Dorsolateral prefrontal cortex (tissue), 120 donors: ENCODE measurements at regions of chr6 and their contacts with region 1.

Region 1: DNA sequence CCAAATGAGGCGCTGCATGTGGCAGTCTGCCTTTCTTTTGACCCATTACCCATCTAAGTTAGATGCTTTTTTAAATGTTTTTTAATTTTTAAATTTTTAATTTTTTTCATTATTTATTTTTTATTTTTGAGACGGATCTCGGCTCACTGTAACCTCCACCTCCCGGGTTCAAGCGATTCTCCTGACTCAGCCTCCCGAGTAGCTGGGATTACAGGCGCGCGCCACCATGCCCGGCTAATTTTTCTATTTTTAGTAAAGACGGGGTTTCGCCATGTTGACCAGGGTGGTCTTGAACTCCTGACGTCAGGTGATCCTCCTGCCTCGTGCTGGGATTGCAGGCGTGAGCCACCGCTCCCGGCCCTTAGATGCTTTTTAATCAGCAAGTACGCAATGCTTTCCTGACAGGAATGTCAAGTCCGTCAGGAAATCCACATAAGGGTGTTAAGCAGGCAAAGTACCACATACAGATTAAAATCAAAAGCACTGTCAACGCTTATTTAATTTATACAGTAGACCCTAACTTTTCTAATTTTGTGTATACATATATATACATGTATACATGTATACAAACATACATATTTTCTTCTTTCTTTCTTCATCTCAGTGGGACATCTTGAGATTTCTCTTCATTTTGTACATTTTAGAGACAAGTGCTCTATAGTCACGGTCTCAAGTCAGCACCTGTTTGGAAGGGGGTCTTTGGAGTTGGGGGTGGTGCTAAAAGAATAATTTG is 995 bp upstream of the GSTA4 start:
- DNase-seq: peak in 7 of 10 donors; percentile 28 to 65 (median 45)
- H3K4me3 ChIP-seq: peak overlapping the region; percentile 2 to 98 (median 81)
- H3K27ac ChIP-seq: peak overlapping the region; percentile 10 to 99 (median 97)
- H3K27me3 ChIP-seq: no peaks in the 10 kb centered on the region
- CTCF ChIP-seq: peak in 1 of 56 donors; percentile 16

Region 2: GRCh38 chr6:52712136-52712535 is 283.9 kb before region 1 on chr6:
- intact Hi-C with region 1: no loop called
- DNase-seq: no peak
- H3K4me3 ChIP-seq: no peak overlapping the region
- H3K27ac ChIP-seq: no peak overlapping the region
- H3K27me3 ChIP-seq: no peaks in the 10 kb centered on the region
- CTCF ChIP-seq: no peak

Region 3: DNA sequence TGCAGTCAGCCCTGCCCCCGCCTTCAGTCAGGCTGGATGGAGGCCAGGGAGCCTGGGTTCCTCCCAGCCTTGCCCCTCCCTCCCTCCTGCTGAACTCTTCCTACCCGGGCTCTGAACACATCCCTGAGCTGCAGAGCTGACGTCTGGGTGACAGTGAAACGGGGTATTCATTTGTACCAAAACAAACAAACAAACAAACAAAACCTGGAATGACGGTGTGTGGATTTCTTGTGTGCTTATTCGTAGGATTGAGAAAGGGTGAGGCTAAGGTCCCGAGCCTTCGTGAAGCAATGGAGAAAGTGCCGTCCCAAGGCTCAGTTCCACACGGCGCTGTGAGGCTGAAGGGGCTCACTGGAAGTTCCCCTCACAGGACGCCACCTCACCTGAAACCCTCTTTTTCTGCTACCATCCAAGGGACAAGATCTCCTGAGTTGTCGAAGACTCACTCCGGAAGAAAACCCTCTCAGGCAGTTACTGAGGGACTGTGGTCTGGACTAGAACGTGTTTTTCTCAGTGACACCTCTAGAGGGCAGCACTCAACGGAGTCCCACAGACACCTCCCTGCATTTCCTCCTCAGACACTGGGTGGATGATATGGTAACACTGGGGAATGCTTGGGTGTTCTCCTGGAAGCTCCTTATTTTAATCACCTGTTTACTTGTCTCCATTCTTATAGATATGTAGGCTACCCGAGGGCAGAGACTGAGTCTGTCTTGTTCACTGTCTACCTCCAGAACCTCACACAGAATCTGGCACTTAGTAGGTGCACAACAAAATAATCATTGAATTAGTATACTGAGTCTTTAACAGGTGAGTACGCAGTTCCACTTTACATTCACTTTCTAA is 113.9 kb before region 1 on chr6:
- intact Hi-C with region 1: loop called (anchors 5 to 10 kb)
- DNase-seq: peak in 8 of 10 donors; percentile 34 to 64 (median 54)
- H3K4me3 ChIP-seq: peak overlapping the region in 58 of 59 donors; percentile 22 to 69 (median 52)
- H3K27ac ChIP-seq: peak overlapping the region in 2 of 59 donors; percentile 24 to 38
- H3K27me3 ChIP-seq: no peaks in the 10 kb centered on the region
- CTCF ChIP-seq: peak; percentile 53 to 85 (median 77)

Region 4: DNA sequence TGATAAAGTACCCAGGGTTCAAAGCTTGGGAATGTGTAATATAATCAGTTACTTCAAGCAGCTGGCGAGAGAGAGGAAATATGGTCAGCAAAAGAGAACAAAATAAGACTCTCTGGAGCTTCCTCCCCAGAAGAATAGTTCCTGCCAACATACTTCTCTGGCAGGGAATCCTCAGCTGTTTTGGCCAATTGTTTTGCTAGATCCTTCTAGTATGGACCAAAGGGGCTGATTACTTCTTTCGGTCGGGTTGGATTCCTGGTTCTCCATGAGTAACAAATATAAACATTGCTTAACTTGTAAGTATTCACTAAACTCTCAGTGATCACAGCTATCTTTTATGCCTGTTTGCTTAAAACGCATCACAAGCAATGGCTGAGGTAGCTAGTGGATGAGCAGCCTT is 37.7 kb after region 1 on chr6:
- intact Hi-C with region 1: loop called in 1 of 2 experiments (anchors 2 kb)
- DNase-seq: no peak
- H3K4me3 ChIP-seq: peak overlapping the region in 1 of 59 donors; percentile 18
- H3K27ac ChIP-seq: peak overlapping the region; percentile 27 to 96 (median 91)
- H3K27me3 ChIP-seq: no peaks in the 10 kb centered on the region
- CTCF ChIP-seq: no peak

Region 5: GRCh38 chr6:53581173-53581773 is 585.2 kb after region 1 on chr6:
- intact Hi-C with region 1: no loop called
- DNase-seq: no peak
- H3K4me3 ChIP-seq: no peak overlapping the region
- H3K27ac ChIP-seq: no peak overlapping the region
- H3K27me3 ChIP-seq: no peaks in the 10 kb centered on the region
- CTCF ChIP-seq: no peak